IMR-90 (cell line): ENCODE measurements at regions of chr1 and their contacts with region 1.

Region 1: DNA sequence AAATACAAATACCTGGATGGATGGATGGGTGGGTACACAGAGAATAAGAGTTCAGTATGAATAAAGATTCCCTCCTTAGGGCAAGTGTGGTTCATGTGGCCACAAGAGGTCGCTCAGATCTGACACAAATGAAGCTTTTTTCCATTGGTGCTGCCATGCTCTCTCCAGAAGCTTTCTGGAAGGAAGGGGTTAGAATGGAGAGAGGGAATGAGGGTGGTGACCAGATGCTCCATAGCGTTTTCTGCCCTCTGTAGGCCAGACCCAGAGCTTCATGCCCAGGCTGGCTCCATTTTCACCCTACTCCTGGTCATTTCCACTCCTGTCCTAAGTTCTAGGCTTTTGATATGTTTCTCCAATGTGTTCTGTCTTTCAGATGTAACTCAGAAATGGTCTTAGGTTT is 3.3 kb upstream of the FCRL6 start:
- DNase-seq: peak; percentile 85
- ATAC-seq: peak; percentile 99
- H3K4me3 ChIP-seq: no peak overlapping the region
- H3K27ac ChIP-seq: no peak overlapping the region
- H3K4me1 ChIP-seq: no peaks in the 10 kb centered on the region
- H3K27me3 ChIP-seq: peaks cover 38% of the 10 kb centered on the region
- CTCF ChIP-seq: peak; percentile 82
- POLR2A ChIP-seq: no peak
- RAD21 ChIP-seq: peak; percentile 91

Region 2: GRCh38 chr1:159430985-159431384 is 367.9 kb before region 1 on chr1:
- CTCF ChIA-PET with region 1: no interaction called
- POLR2A ChIA-PET with region 1: no interaction called
- dilution Hi-C with region 1: no loop called
- in situ Hi-C with region 1: no loop called
- intact Hi-C with region 1: no loop called
- DNase-seq: no peak
- ATAC-seq: no peak
- H3K4me3 ChIP-seq: no peak overlapping the region
- H3K27ac ChIP-seq: no peak overlapping the region
- H3K4me1 ChIP-seq: no peaks in the 10 kb centered on the region
- H3K27me3 ChIP-seq: no peaks in the 10 kb centered on the region
- CTCF ChIP-seq: no peak
- POLR2A ChIP-seq: no peak
- RAD21 ChIP-seq: no peak

Region 3: GRCh38 chr1:159786966-159787365 is 11.9 kb before region 1 on chr1:
- CTCF ChIA-PET with region 1: interaction called, 12 read pairs
- POLR2A ChIA-PET with region 1: no interaction called
- dilution Hi-C with region 1: no loop called
- in situ Hi-C with region 1: no loop called
- intact Hi-C with region 1: no loop called
- DNase-seq: peak; percentile 15
- ATAC-seq: peak; percentile 48; the same call in 1 of the 2 replicates
- H3K4me3 ChIP-seq: no peak overlapping the region
- H3K27ac ChIP-seq: no peak overlapping the region
- H3K4me1 ChIP-seq: no peaks in the 10 kb centered on the region
- H3K27me3 ChIP-seq: peaks cover 4% of the 10 kb centered on the region
- CTCF ChIP-seq: no peak
- POLR2A ChIP-seq: no peak
- RAD21 ChIP-seq: no peak

Region 4: DNA sequence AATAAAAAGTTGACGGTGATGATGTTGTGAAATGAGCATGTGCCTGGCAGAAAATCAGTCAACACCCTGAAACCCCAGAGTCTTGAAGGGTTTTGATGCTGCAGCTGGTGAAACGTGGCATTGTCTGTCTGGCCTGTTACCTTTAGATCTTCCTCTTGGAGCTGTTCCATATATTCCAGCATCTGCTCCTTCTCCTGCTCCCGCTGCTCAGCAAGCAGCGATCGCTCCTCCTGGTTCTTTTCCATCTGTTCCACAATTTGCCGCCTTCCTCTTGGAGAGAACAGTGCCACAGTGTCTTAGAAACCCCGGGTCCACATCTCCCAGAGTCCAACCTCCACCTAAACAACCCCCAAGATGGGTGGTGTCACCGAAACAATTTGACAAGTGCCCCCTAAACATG is 85.4 kb after region 1 on chr1:
- CTCF ChIA-PET with region 1: interaction called, 150 read pairs
- POLR2A ChIA-PET with region 1: no interaction called
- dilution Hi-C with region 1: loop called (anchors 25 kb)
- in situ Hi-C with region 1: no loop called
- intact Hi-C with region 1: no loop called
- DNase-seq: no peak
- ATAC-seq: no peak
- H3K4me3 ChIP-seq: no peak overlapping the region
- H3K27ac ChIP-seq: no peak overlapping the region
- H3K4me1 ChIP-seq: peaks cover 16% of the 10 kb centered on the region
- H3K27me3 ChIP-seq: no peaks in the 10 kb centered on the region
- CTCF ChIP-seq: no peak
- POLR2A ChIP-seq: no peak
- RAD21 ChIP-seq: no peak